ENCODE measurements at regions of chr15 and their contacts with region 1.

Region 1: GRCh38 chr15:69394556-69395282 is 19.4 kb upstream of the KIF23 start:
- DNase-seq: peak; percentile 74 to 93
- ATAC-seq: peak; percentile 81 to 93
- H3K4me3 ChIP-seq: no peak overlapping the region
- H3K27ac ChIP-seq: peak overlapping the region; percentile 24 to 66; a peak in 5 of 6 replicates
- H3K4me1 ChIP-seq: peaks cover 26% of the 10 kb centered on the region
- CTCF ChIP-seq: peak; percentile 90
- EP300 ChIP-seq: no peak
- POLR2A ChIP-seq: no peak
- RAD21 ChIP-seq: peak; percentile 92 to 94

Region 2: DNA sequence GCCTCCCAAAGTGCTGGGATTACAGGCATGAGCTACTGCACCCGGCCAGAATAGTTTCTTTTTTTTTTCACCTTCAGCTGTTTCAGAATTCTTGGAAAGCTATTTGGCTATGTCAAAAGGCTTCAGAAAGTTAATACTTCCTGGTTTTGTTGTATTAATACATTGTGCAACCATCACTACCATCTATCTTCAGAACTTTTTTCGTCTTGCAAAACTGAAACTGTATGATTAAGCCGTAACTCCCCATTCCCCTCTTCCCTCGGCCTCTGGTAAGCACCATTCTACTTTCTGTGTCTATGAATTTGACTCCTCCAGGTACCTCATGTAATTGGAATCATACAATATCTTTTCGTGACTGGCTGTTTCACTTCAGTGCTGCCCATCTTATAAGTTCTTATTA is 385.4 kb before region 1 on chr15:
- CTCF ChIA-PET with region 1: no interaction called
- POLR2A ChIA-PET with region 1: no interaction called
- DNase-seq: no peak
- ATAC-seq: no peak
- H3K4me3 ChIP-seq: no peak overlapping the region
- H3K27ac ChIP-seq: no peak overlapping the region
- H3K4me1 ChIP-seq: peaks cover 7% of the 10 kb centered on the region; the same call in 2 of the 3 replicates
- CTCF ChIP-seq: no peak
- EP300 ChIP-seq: no peak
- POLR2A ChIP-seq: no peak
- RAD21 ChIP-seq: no peak

Region 3: GRCh38 chr15:69045808-69046207 is 348.9 kb before region 1 on chr15:
- CTCF ChIA-PET with region 1: interaction called, 19 read pairs
- POLR2A ChIA-PET with region 1: no interaction called
- DNase-seq: peak in 1 of 2 experiments; percentile 58
- ATAC-seq: peak; percentile 67 to 89; a peak in 5 of 6 replicates
- H3K4me3 ChIP-seq: no peak overlapping the region
- H3K27ac ChIP-seq: peak overlapping the region in 1 of 2 experiments; percentile 65; a peak in 3 of 6 replicates
- H3K4me1 ChIP-seq: peaks cover 24% of the 10 kb centered on the region
- CTCF ChIP-seq: no peak
- EP300 ChIP-seq: no peak
- POLR2A ChIP-seq: no peak
- RAD21 ChIP-seq: no peak

Region 4: GRCh38 chr15:69154684-69155083 is 240.0 kb before region 1 on chr15:
- CTCF ChIA-PET with region 1: interaction called, 51 read pairs
- POLR2A ChIA-PET with region 1: no interaction called
- DNase-seq: no peak
- ATAC-seq: peak in 1 of 2 experiments; percentile 51; a peak in 3 of 6 replicates
- H3K4me3 ChIP-seq: no peak overlapping the region
- H3K27ac ChIP-seq: no peak overlapping the region
- H3K4me1 ChIP-seq: peaks cover 10% of the 10 kb centered on the region
- CTCF ChIP-seq: no peak
- EP300 ChIP-seq: no peak
- POLR2A ChIP-seq: no peak
- RAD21 ChIP-seq: no peak

Region 5: GRCh38 chr15:69290346-69291164 is 104.2 kb before region 1 on chr15:
- CTCF ChIA-PET with region 1: interaction called, 32 read pairs
- POLR2A ChIA-PET with region 1: no interaction called
- DNase-seq: no peak
- ATAC-seq: peak in 1 of 2 experiments; percentile 25; a peak in 1 of 6 replicates
- H3K4me3 ChIP-seq: no peak overlapping the region
- H3K27ac ChIP-seq: peak overlapping the region in 1 of 2 experiments; percentile 37; a peak in 3 of 6 replicates
- H3K4me1 ChIP-seq: peaks cover 22% of the 10 kb centered on the region
- CTCF ChIP-seq: no peak
- EP300 ChIP-seq: no peak
- POLR2A ChIP-seq: no peak
- RAD21 ChIP-seq: no peak

Region 6: GRCh38 chr15:69346112-69346511 is 48.6 kb before region 1 on chr15:
- CTCF ChIA-PET with region 1: interaction called, 10 read pairs
- POLR2A ChIA-PET with region 1: no interaction called
- DNase-seq: no peak
- ATAC-seq: no peak; a peak in 1 of 6 replicates
- H3K4me3 ChIP-seq: no peak overlapping the region
- H3K27ac ChIP-seq: peak overlapping the region in 1 of 2 experiments; percentile 39; a peak in 1 of 6 replicates
- H3K4me1 ChIP-seq: peaks cover 16% of the 10 kb centered on the region
- CTCF ChIP-seq: no peak
- EP300 ChIP-seq: no peak
- POLR2A ChIP-seq: no peak
- RAD21 ChIP-seq: no peak

Region 7: DNA sequence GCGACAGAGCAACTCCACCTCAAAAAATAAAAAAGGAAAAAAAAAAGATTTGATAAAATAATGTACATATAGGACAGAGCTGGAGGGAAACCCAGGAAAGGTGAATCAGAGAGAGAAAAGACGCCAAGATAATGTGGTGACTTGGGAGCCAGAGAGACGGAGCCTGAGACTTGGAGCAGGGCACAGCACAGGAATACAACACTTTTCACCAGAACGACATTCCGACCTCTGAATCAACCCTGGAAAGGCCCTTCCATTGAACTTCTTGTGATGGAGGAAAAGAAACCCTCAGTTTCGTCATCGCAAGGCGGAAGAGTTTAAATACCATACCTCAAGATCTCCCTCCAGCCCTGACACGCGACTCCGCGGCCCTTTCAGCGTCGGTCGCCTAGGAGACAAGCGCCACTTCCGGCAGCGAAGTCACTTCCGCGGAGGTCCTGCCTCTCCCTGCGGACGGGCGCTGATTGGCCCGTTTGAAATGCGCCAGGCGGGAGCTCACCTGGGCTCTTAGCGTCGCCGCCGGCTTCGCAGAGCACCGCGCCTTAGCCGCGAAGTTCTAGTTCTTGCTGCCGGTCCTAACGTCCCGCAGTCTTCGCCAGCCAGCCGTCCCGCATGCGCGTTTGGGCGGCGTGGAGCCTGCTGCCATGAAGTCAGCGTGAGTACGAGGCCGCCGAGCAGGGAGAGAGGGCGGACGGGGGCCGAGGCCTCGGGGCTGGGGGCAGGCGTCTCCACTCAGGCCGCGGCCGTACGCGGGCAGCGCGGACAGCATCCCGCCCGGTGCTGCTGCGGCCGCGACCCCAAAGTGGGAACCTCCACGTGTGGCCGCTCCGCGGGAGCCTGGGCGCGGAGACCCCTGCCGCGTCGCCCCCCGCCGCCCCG is 19.3 kb after region 1 on chr15 and contains the start of gene KIF23:
- CTCF ChIA-PET with region 1: interaction called, 24 read pairs
- POLR2A ChIA-PET with region 1: no interaction called
- DNase-seq: peak; percentile 97 to 99
- ATAC-seq: peak; percentile 93 to 96
- H3K4me3 ChIP-seq: peak within 1 kb of the TSS; percentile 83
- H3K27ac ChIP-seq: peak within 1 kb of the TSS; percentile 83 to 93
- H3K4me1 ChIP-seq: peaks cover 43% of the 10 kb centered on the region
- CTCF ChIP-seq: no peak
- EP300 ChIP-seq: no peak
- POLR2A ChIP-seq: peak; percentile 56
- RAD21 ChIP-seq: no peak
- polyA plus RNA-seq, gene KIF23: 79.5 and 117 TPM in 2 replicates

Measured in A549 (cell line).